Activated CD4-positive, alpha-beta T cell treated with anti-CD3 and anti-CD28 coated beads, Interleukin-2, amount 10 ng/mL, durations not matched to agents 24 days and 14 days (primary cell): ENCODE measurements at regions of chr12 and their contacts with region 1.

Region 1: GRCh38 chr12:47705566-47706425 is at the start of gene RPAP3:
- DNase-seq: peak; percentile 99
- H3K4me3 Mint-ChIP-seq: peak within 1 kb of the TSS; percentile 97
- H3K27ac Mint-ChIP-seq: peak within 1 kb of the TSS; percentile 99
- H3K4me1 Mint-ChIP-seq: peaks cover 53% of the 10 kb centered on the region
- H3K27me3 Mint-ChIP-seq: no peaks in the 10 kb centered on the region
- total RNA-seq, gene RPAP3: 63.4 and 67.3 TPM in 2 replicates

Region 2: GRCh38 chr12:47361389-47362021 is 344.3 kb before region 1 on chr12:
- intact Hi-C with region 1: loop called (anchors 10 kb)
- DNase-seq: peak; percentile 88
- H3K4me3 Mint-ChIP-seq: peak overlapping the region; percentile 81
- H3K27ac Mint-ChIP-seq: peak overlapping the region; percentile 98
- H3K4me1 Mint-ChIP-seq: peaks cover 53% of the 10 kb centered on the region
- H3K27me3 Mint-ChIP-seq: no peaks in the 10 kb centered on the region

Region 3: GRCh38 chr12:47651368-47652254 is 54.2 kb before region 1 on chr12:
- intact Hi-C with region 1: loop called (anchors 5 kb)
- DNase-seq: peak; percentile 84
- H3K4me3 Mint-ChIP-seq: peak overlapping the region; percentile 7
- H3K27ac Mint-ChIP-seq: peak overlapping the region; percentile 5
- H3K4me1 Mint-ChIP-seq: peaks cover 14% of the 10 kb centered on the region
- H3K27me3 Mint-ChIP-seq: no peaks in the 10 kb centered on the region

Region 4: DNA sequence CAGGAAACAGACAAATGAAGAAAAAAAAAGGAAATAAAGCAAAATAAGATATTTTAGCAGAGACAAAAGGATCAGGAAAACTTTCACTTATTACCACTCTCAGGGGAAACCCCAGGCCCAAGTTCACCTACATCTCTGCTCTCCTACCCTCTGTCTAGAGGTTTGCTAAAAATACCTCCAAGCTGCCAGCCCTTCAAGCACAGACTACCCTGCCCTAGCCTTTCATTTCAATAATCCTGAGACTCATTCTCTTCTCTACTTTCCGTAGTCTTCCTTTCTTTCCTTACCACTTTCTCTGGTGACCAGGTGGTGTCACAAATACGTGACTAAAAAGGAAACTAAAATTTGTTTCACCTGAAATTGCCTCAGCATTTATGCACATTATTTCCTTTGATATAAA is 33.7 kb before region 1 on chr12:
- intact Hi-C with region 1: no loop called
- DNase-seq: no peak
- H3K4me3 Mint-ChIP-seq: no peak overlapping the region
- H3K27ac Mint-ChIP-seq: no peak overlapping the region
- H3K4me1 Mint-ChIP-seq: peaks cover 20% of the 10 kb centered on the region
- H3K27me3 Mint-ChIP-seq: no peaks in the 10 kb centered on the region

Region 5: DNA sequence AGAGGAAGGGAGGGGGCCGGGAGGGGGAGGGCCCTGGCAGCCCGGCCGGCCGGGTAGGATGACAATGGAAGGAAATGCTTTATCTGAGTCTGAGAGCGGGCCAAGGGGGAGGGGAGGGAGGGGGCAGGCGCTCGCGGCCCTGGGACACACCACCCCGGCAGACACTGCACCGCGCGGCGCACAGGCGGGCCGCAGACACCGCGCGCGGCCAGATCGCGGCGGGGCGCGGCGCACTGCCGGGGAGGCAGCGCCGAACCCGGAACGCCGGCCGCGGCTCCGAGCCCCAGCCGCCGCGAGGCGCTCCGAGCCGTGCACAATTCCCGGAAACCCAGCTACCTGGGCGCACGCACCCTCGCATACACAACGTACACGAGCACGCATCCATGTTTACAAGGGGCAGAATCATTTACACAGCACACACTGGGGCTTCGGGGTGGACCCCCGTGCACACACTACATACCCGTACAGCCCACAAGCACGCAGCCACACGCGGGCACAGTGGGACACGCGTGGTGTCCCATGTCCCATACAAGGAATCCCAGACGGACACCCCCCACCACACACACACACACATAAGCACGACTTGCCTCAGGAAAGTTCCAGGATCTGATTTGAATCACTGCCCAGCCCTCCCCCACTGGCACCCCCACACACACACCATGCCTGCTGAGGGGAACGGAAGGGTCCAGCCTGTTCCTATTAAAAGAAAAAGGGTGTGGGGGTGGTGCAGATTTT is 114.3 kb after region 1 on chr12 and contains the start of gene HDAC7:
- intact Hi-C with region 1: no loop called
- DNase-seq: peak; percentile 89
- H3K4me3 Mint-ChIP-seq: peak within 1 kb of the TSS; percentile 88
- H3K27ac Mint-ChIP-seq: peak within 1 kb of the TSS; percentile 99
- H3K4me1 Mint-ChIP-seq: peaks cover 64% of the 10 kb centered on the region
- H3K27me3 Mint-ChIP-seq: no peaks in the 10 kb centered on the region
- total RNA-seq, gene HDAC7: 405 and 419 TPM in 2 replicates

Region 6: GRCh38 chr12:47832263-47832933 is 126.6 kb after region 1 on chr12:
- intact Hi-C with region 1: loop called (anchors 5 kb)
- DNase-seq: peak; percentile 80
- H3K4me3 Mint-ChIP-seq: peak overlapping the region; percentile 79
- H3K27ac Mint-ChIP-seq: peak overlapping the region; percentile 99
- H3K4me1 Mint-ChIP-seq: peaks cover 86% of the 10 kb centered on the region
- H3K27me3 Mint-ChIP-seq: no peaks in the 10 kb centered on the region